MCF 10A (cell line): ENCODE measurements at regions of chr15 and their contacts with region 1.

Region 1: DNA sequence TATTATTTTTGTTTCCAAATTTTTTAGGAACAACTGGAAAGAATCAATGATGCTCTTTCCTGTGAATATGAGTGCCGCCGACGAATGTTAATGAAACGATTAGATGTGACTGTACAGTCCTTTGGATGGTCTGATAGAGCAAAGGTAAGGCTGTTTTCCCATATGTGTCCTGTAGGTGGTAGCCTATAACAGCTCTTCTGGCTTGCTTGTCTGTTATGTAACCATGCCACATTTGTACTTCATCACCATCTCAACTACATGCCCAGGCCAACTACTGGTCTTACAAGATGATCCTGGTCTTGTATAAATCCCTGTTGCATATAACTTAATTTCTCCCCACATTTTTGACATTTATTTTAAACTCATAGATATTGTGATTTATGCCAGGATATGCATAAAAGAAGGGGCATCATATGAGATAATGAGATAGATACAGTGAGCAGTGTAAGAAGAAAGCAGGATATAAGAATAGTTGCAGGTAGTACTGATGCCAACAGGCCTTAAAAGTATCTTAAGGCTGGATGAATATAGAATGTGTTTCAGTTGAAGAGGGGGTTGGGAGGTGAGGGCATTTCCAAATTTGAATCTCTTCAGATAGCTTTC is 20.3 kb downstream of the FAM98B start:
- DNase-seq: peak; percentile 61
- H3K4me3 Mint-ChIP-seq: no peak overlapping the region
- H3K27ac Mint-ChIP-seq: no peak overlapping the region
- H3K4me1 Mint-ChIP-seq: peaks cover 6% of the 10 kb centered on the region
- H3K27me3 Mint-ChIP-seq: no peaks in the 10 kb centered on the region
- CTCF ChIP-seq: peak; percentile 63

Region 2: DNA sequence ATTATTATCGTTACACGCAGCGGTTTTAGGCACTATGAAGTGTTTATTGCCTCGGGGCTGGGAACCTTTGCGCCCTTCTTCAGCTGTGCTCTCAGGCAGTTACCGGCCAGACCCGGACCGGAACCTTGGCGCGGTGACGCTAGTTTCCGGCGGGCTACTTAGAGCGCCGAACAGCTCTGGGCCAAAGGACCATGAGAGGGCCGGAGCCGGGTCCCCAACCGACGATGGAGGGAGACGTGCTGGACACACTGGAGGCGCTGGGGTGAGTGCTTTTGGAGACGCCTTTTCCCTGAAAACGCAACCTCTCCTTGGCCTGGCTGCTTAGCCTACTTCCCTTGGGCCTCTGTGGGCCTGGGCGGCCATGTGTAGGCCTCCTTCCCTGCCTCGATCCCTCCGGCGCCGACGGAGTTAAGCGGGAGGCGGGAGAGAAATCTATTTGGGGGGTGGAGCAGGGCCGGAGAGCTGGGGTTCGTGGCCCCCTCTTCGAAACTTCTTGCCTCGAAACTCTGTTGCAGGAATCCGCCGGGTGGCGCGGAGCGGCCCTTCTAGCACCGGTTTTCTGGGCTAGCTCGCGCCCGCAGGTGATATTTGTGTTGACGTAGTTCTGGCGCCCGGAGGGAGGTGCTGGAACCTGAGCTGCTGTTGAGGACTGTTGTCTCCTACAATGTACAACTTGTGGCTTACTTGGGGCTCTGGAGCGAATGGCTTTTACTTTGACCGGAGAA is 20.1 kb before region 1 on chr15 and contains the start of gene FAM98B:
- CTCF ChIA-PET with region 1: interaction called, 6 read pairs
- POLR2A ChIA-PET with region 1: interaction called, 13 read pairs
- intact Hi-C with region 1: no loop called
- DNase-seq: peak; percentile 90
- H3K4me3 Mint-ChIP-seq: peak within 1 kb of the TSS; percentile 91
- H3K27ac Mint-ChIP-seq: peak within 1 kb of the TSS; percentile 97
- H3K4me1 Mint-ChIP-seq: peaks cover 20% of the 10 kb centered on the region
- H3K27me3 Mint-ChIP-seq: peaks cover 30% of the 10 kb centered on the region
- CTCF ChIP-seq: no peak
- total RNA-seq, gene FAM98B: 26.5 and 33.1 TPM in 2 replicates

Region 3: GRCh38 chr15:38486936-38487335 is 12.7 kb after region 1 on chr15:
- CTCF ChIA-PET with region 1: interaction called, 10 read pairs
- POLR2A ChIA-PET with region 1: no interaction called
- intact Hi-C with region 1: no loop called
- DNase-seq: no peak
- H3K4me3 Mint-ChIP-seq: no peak overlapping the region
- H3K27ac Mint-ChIP-seq: no peak overlapping the region
- H3K4me1 Mint-ChIP-seq: no peaks in the 10 kb centered on the region
- H3K27me3 Mint-ChIP-seq: no peaks in the 10 kb centered on the region
- CTCF ChIP-seq: no peak

Region 4: DNA sequence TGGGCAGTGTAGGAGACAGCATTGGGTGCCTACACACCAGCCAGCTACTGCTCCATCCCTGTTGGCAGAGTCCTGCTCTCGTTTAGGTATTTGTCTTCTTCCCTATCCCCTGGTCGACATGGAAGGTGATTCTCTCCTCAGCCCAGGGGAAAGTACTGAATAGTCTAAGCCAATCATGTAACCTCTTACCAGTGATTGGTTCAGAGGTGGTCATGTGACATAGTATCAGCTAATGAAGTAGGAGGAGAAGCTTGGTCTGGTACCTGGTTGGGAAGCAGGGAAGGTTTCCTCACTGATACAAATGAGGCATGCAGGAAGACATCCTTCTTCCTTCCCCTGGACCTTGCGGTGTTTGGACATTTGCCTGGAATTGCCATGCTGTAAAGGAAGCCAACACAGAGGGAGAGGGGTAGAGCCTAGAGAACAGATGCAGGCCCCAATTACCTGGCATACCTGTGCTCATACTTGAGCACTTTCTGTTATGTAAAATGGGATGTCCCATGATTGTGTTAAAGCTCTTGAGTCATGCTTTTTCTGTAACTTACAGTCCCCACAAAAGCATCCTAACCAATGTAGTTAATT is 123.1 kb after region 1 on chr15:
- CTCF ChIA-PET with region 1: no interaction called
- POLR2A ChIA-PET with region 1: no interaction called
- intact Hi-C with region 1: no loop called
- DNase-seq: no peak
- H3K4me3 Mint-ChIP-seq: no peak overlapping the region
- H3K27ac Mint-ChIP-seq: no peak overlapping the region
- H3K4me1 Mint-ChIP-seq: peaks cover 9% of the 10 kb centered on the region
- H3K27me3 Mint-ChIP-seq: no peaks in the 10 kb centered on the region
- CTCF ChIP-seq: no peak

Region 5: GRCh38 chr15:38647683-38648082 is 173.4 kb after region 1 on chr15:
- CTCF ChIA-PET with region 1: interaction called, 12 read pairs
- POLR2A ChIA-PET with region 1: interaction called, 3 read pairs
- intact Hi-C with region 1: loop called (anchors 1 kb)
- DNase-seq: peak; percentile 58
- H3K4me3 Mint-ChIP-seq: no peak overlapping the region
- H3K27ac Mint-ChIP-seq: no peak overlapping the region
- H3K4me1 Mint-ChIP-seq: no peaks in the 10 kb centered on the region
- H3K27me3 Mint-ChIP-seq: no peaks in the 10 kb centered on the region
- CTCF ChIP-seq: peak; percentile 61

Region 6: DNA sequence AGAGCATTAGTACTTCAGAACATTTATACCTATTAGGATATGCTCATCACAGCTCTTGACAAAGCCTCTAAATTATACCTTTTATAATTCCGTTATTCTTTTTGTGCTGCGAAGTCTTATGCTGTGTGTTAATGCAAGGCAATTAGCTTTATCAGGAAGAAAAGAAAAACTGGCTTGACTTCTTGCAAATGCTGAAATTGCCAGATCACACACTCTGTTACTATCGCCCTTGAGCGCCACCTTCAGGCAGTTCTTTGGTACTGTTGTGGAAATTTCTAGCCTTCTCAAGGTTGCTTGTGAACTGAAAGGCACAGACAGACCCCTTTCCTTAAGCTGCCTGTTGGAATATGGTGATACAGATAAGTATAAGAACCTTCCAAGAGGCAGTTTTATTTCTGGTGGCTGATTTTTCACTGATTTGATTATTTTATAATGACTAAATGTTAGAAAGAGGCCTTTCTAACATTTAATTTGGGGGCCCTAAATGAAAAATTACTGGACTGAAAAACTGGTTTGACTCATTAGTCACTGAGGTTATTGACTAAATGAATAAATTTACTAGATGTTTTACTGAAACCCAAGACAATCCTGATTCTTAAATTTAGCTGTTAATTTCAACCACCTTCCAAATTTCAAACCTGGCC is 216.6 kb after region 1 on chr15:
- CTCF ChIA-PET with region 1: interaction called, 15 read pairs
- POLR2A ChIA-PET with region 1: no interaction called
- intact Hi-C with region 1: no loop called
- DNase-seq: peak; percentile 81
- H3K4me3 Mint-ChIP-seq: no peak overlapping the region
- H3K27ac Mint-ChIP-seq: no peak overlapping the region
- H3K4me1 Mint-ChIP-seq: peaks cover 6% of the 10 kb centered on the region
- H3K27me3 Mint-ChIP-seq: no peaks in the 10 kb centered on the region
- CTCF ChIP-seq: peak; percentile 78

Region 7: GRCh38 chr15:38868326-38869114 is 394.3 kb after region 1 on chr15:
- CTCF ChIA-PET with region 1: no interaction called
- POLR2A ChIA-PET with region 1: no interaction called
- intact Hi-C with region 1: no loop called
- DNase-seq: peak; percentile 89
- H3K4me3 Mint-ChIP-seq: no peak overlapping the region
- H3K27ac Mint-ChIP-seq: peak overlapping the region; percentile 70
- H3K4me1 Mint-ChIP-seq: peaks cover 8% of the 10 kb centered on the region
- H3K27me3 Mint-ChIP-seq: no peaks in the 10 kb centered on the region
- CTCF ChIP-seq: no peak